ENCODE measurements at regions of chr20 and their contacts with region 1.

Region 1: DNA sequence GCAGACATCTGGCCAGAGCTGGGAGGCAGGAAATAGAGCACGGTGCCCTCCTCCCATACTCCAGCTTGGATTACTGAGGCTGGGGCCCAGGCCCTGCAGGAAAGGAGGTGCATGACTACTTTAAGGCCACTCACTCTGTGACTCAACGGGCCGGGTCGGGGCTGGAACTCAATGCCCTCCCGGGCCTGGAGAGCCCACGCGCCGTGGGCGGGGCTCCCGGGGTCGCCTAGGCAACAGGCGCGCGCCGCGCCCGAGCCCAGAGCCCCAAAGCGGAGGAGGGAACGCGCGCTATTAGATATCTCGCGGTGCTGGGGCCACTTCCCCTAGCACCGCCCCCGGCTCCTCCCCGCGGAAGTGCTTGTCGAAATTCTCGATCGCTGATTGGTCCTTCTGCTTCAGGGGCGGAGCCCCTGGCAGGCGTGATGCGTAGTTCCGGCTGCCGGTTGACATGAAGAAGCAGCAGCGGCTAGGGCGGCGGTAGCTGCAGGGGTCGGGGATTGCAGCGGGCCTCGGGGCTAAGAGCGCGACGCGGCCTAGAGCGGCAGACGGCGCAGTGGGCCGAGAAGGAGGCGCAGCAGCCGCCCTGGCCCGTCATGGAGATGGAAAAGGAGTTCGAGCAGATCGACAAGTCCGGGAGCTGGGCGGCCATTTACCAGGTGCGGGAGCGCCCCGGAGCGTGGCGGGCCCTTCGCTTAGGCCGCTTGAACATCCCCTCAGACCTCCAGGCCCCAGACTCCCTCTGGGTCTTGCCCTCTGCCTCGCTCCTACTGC is at the start of gene PTPN1:
- DNase-seq: peak; percentile 97 to 100 (median 99)
- ATAC-seq: peak; percentile 98
- H3K4me3 ChIP-seq: peak within 1 kb of the TSS; percentile 88
- H3K4me3 Mint-ChIP-seq: peak within 1 kb of the TSS; percentile 93 to 100 (median 97)
- H3K27ac ChIP-seq: peak within 1 kb of the TSS; percentile 89
- H3K27ac Mint-ChIP-seq: peak within 1 kb of the TSS; percentile 93 to 98 (median 98)
- H3K4me1 ChIP-seq: peaks cover 32 to 38% of the 10 kb centered on the region in 2 donors
- H3K4me1 Mint-ChIP-seq: peaks cover 36 to 52% (median 46%) of the 10 kb centered on the region in 7 donors
- H3K27me3 ChIP-seq: no peaks in the 10 kb centered on the region
- H3K27me3 Mint-ChIP-seq: no peaks in the 10 kb centered on the region
- total RNA-seq, gene PTPN1: 53.9 to 80.5 (median 60.2) TPM

Region 2: DNA sequence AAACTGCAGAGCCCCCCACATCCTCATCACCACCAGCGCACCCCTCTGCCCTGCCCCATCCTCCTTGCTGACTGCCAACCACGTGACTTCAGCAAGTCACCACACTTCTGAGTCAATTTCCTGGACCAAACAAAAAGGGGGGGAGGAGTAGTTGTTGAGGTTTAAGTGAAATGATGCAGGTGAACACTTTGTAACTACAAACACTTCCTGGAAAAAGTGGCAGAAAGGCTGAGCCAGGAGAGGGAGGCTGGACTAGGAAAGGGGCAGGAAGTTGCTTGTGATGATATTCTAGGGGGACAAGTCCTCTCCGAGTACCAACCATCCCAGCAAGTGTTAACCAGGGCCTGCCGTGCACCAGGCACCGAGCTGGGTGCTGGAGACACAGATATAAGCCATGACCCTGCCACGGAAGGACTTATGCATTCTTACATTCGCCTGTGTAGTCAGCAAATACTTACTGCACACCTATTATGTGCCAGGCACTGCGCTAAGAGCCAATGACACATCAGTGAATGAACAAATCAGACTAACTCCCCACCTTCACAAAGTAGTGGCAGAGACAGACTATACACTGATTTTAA is 1749.6 kb before region 1 on chr20:
- CTCF ChIA-PET with region 1: no interaction called
- POLR2A ChIA-PET with region 1: no interaction called
- intact Hi-C with region 1: no loop called
- DNase-seq: peak in 8 of 9 donors; percentile 21 to 74 (median 62)
- ATAC-seq: peak; percentile 85
- H3K4me3 ChIP-seq: peak overlapping the region; percentile 48
- H3K4me3 Mint-ChIP-seq: peak overlapping the region in 9 of 10 donors; percentile 54 to 81 (median 70)
- H3K27ac ChIP-seq: peak overlapping the region; percentile 57
- H3K27ac Mint-ChIP-seq: peak overlapping the region; percentile 85 to 95 (median 93)
- H3K4me1 ChIP-seq: peaks cover 45 to 72% of the 10 kb centered on the region in 2 donors
- H3K4me1 Mint-ChIP-seq: peaks cover 38 to 86% (median 58%) of the 10 kb centered on the region in 7 donors
- H3K27me3 ChIP-seq: no peaks in the 10 kb centered on the region
- H3K27me3 Mint-ChIP-seq: no peaks in the 10 kb centered on the region

Region 3: GRCh38 chr20:49594143-49594930 is 915.8 kb before region 1 on chr20:
- CTCF ChIA-PET with region 1: no interaction called
- POLR2A ChIA-PET with region 1: no interaction called
- intact Hi-C with region 1: loop called in 1 of 2 experiments (anchors 10 kb)
- DNase-seq: peak in 1 of 9 donors; percentile 76
- ATAC-seq: no peak
- H3K4me3 ChIP-seq: no peak overlapping the region
- H3K4me3 Mint-ChIP-seq: peak overlapping the region in 1 of 10 donors; percentile 85
- H3K27ac ChIP-seq: no peak overlapping the region
- H3K27ac Mint-ChIP-seq: peak overlapping the region in 1 of 9 donors; percentile 97
- H3K4me1 ChIP-seq: peaks cover 0 to 38% of the 10 kb centered on the region in 2 donors
- H3K4me1 Mint-ChIP-seq: peaks cover 0 to 86% (median 4%) of the 10 kb centered on the region in 7 donors
- H3K27me3 ChIP-seq: no peaks in the 10 kb centered on the region
- H3K27me3 Mint-ChIP-seq: peaks cover 0 to 13% (median 4%) of the 10 kb centered on the region in 5 donors

Region 4: DNA sequence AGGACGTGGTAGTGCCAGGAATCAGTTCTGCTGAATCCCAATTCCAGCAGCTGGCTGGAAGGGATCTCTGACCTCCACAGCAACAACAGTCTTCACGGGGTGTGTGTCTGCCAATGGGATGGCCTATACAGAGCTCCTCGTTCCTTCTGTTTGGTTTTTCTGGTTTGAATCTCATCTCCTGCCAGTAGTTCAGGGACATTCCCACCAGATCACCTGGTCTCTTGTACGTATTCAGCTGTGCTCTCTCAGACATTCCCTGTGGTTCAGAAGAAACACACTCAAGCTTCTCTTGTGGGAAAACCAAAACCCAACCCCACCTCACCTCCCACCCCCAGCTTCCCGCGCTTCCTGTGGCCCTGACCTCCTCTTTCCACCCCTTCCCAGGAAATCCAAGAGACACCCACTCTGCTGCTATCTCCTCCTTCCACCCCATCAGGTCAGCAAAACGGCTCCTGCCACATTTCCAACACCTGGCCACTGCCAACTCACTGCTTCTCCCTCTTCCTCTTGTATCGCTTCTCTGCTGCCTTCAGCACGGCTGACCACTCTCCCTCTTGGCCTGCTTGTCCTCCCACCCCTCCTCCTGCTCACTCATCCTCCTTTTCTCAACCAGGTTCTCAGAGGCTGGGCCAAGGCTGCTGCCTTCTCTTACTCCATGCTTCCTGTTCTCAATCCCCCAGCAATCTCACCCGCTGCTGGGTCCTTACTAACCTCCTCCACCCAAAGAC is 878.9 kb before region 1 on chr20:
- CTCF ChIA-PET with region 1: no interaction called
- POLR2A ChIA-PET with region 1: no interaction called
- intact Hi-C with region 1: no loop called
- DNase-seq: no peak
- ATAC-seq: no peak
- H3K4me3 ChIP-seq: no peak overlapping the region
- H3K4me3 Mint-ChIP-seq: no peak overlapping the region
- H3K27ac ChIP-seq: no peak overlapping the region
- H3K27ac Mint-ChIP-seq: peak overlapping the region in 1 of 9 donors; percentile 30
- H3K4me1 ChIP-seq: no peaks in the 10 kb centered on the region
- H3K4me1 Mint-ChIP-seq: peaks cover 0 to 18% (median 0%) of the 10 kb centered on the region in 7 donors
- H3K27me3 ChIP-seq: no peaks in the 10 kb centered on the region
- H3K27me3 Mint-ChIP-seq: peaks cover 0 to 5% (median 0%) of the 10 kb centered on the region in 5 donors

Region 5: DNA sequence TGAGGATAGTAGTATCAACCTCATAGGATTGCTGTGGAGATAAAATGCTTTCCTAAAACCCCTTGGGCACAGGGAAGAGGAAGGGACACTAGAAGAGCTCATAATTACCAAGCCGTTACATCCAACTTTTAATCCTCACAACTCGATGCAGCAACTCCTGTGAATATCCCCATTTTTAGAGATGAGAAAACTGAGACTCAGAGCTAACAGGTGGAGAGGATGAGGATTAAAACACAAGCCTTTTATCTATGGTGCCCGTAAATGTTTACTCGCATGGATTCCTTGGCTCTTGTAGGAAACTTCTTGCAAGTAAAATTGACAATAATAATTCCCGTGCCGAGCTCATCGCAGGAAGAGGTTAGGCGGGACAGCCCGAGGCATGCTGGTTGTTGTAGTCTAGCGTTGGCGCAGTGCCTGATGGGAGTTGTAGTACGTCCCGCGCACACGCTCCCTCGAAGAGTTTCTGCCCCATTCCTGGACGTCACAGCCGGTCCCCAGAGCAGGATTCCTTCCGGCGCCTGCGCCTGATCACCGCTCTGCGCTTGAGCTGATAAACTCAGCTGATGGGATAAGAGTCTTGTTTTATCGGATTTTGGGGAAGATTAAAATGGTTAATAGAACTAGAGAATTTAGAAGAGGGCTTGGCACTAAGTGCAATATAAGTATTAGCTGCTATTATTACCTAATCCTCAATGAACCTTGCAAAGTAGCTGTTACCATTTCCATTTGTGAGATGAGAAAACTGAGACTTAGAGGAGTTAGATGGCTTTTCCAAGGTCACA is 394.3 kb before region 1 on chr20:
- CTCF ChIA-PET with region 1: no interaction called
- POLR2A ChIA-PET with region 1: interaction called, 6 read pairs
- intact Hi-C with region 1: loop called (anchors 1 kb)
- DNase-seq: peak; percentile 69 to 91 (median 87)
- ATAC-seq: peak; percentile 90
- H3K4me3 ChIP-seq: peak overlapping the region; percentile 58
- H3K4me3 Mint-ChIP-seq: peak overlapping the region; percentile 78 to 97 (median 90)
- H3K27ac ChIP-seq: peak overlapping the region; percentile 76
- H3K27ac Mint-ChIP-seq: peak overlapping the region; percentile 70 to 98 (median 92)
- H3K4me1 ChIP-seq: peaks cover 38 to 39% of the 10 kb centered on the region in 2 donors
- H3K4me1 Mint-ChIP-seq: peaks cover 37 to 55% (median 51%) of the 10 kb centered on the region in 7 donors
- H3K27me3 ChIP-seq: no peaks in the 10 kb centered on the region
- H3K27me3 Mint-ChIP-seq: no peaks in the 10 kb centered on the region

Region 6: DNA sequence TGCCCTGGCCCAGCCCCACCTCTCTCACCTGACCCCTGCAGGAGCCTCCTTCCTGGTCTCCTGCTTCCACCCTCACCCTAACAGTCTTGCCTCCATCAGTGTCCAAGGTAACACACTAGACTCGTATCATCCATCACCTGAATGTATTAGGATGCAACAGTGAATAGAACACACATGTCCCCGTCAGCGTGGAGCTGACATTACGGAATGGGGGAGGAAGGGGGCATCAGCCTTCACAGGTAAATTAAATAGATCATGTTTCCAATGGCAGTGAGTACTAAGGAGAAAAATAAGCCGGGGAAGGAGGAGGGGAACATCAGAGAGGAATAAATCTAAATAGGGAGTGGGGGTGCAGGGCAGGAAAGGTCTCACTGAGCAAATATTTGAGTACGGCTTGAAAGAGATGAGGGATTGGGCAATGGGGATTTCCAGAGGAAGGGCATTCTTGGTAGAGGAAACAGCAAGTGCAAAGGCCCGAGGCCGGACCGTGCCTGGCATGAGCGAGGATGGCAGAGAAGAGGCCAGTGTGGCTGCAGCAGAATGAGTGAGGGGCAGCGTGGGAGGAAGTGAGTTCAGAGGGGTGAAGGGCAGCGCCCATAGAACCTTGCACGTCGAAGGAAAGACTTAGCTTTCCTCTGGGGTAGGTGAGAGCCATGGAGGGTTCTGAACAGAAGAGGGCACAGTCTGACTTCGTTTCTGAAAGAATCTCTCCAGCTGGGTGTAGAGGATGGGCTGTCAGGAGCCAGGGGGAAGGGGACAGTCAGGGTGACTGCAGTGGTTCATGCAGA is 110.0 kb before region 1 on chr20:
- CTCF ChIA-PET with region 1: no interaction called
- POLR2A ChIA-PET with region 1: no interaction called
- intact Hi-C with region 1: no loop called
- DNase-seq: no peak
- ATAC-seq: peak; percentile 20
- H3K4me3 ChIP-seq: no peak overlapping the region
- H3K4me3 Mint-ChIP-seq: no peak overlapping the region
- H3K27ac ChIP-seq: no peak overlapping the region
- H3K27ac Mint-ChIP-seq: peak overlapping the region in 1 of 9 donors; percentile 38
- H3K4me1 ChIP-seq: no peaks in the 10 kb centered on the region
- H3K4me1 Mint-ChIP-seq: peaks cover 0 to 5% (median 0%) of the 10 kb centered on the region in 7 donors
- H3K27me3 ChIP-seq: no peaks in the 10 kb centered on the region
- H3K27me3 Mint-ChIP-seq: peaks cover 0 to 20% (median 0%) of the 10 kb centered on the region in 5 donors

Region 7: GRCh38 chr20:50478162-50479036 is 31.7 kb before region 1 on chr20:
- CTCF ChIA-PET with region 1: interaction called, 6 read pairs
- POLR2A ChIA-PET with region 1: interaction called, 12 read pairs
- intact Hi-C with region 1: loop called (anchors 1 to 2 kb)
- DNase-seq: peak; percentile 50 to 81 (median 73)
- ATAC-seq: peak; percentile 100
- H3K4me3 ChIP-seq: no peak overlapping the region
- H3K4me3 Mint-ChIP-seq: peak overlapping the region in 1 of 10 donors; percentile 19
- H3K27ac ChIP-seq: no peak overlapping the region
- H3K27ac Mint-ChIP-seq: peak overlapping the region in 1 of 9 donors; percentile 9
- H3K4me1 ChIP-seq: peaks cover 8 to 14% of the 10 kb centered on the region in 2 donors
- H3K4me1 Mint-ChIP-seq: peaks cover 8 to 41% (median 19%) of the 10 kb centered on the region in 7 donors
- H3K27me3 ChIP-seq: no peaks in the 10 kb centered on the region
- H3K27me3 Mint-ChIP-seq: no peaks in the 10 kb centered on the region

Region 8: DNA sequence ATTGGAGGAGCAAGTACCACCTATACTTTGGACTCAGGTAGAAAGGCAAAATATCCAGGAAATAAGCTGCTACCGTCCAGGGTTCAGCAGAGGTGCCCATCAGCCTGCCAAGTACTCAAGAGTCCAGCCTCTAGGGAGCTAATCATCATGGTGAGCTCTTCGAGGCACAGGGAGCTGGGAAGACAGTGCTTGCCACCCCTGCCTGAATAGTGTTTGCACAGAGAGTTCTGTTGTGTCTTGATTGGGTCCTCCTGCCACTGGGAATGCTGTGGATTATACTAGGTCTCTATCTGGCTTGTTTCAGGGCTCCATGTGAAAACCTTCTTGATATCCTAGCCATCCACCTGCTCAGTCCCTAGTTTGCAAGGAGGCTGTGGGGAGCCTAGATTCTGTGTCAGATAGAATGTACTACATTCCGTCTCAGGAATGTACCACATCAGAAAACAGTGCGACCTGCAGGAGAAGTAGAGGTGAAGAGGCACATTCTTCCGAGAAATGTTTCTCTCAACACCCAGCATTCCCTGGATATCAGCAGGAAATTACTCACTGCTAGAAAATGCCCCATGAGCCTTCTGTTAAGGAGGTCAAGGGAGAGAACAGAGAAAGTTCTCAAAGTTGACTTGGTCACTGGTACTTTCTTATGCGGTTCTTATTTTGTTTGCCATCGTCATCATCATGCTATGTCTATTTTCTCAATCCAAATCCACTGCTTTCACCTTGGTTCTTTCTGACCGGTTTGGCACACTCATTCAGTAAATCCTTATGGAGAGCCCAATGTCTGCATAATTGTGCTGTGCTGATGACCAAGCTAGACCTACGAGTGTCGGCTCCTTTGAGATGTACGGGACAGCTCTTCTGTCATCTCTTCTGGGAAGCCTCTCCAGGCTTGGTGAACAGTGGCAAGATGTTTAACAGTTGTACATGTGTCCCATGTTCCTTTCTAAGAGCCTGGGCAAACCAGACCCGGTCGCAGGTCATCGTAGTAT is 30.8 kb after region 1 on chr20:
- CTCF ChIA-PET with region 1: interaction called, 4 read pairs
- POLR2A ChIA-PET with region 1: interaction called, 17 read pairs
- intact Hi-C with region 1: loop called in 1 of 2 experiments (anchors 1 kb)
- DNase-seq: no peak
- ATAC-seq: no peak
- H3K4me3 ChIP-seq: no peak overlapping the region
- H3K4me3 Mint-ChIP-seq: peak overlapping the region in 7 of 10 donors; percentile 6 to 59 (median 32)
- H3K27ac ChIP-seq: no peak overlapping the region
- H3K27ac Mint-ChIP-seq: peak overlapping the region in 8 of 9 donors; percentile 3 to 87 (median 54)
- H3K4me1 ChIP-seq: peaks cover 13 to 34% of the 10 kb centered on the region in 2 donors
- H3K4me1 Mint-ChIP-seq: peaks cover 60 to 93% (median 82%) of the 10 kb centered on the region in 7 donors
- H3K27me3 ChIP-seq: no peaks in the 10 kb centered on the region
- H3K27me3 Mint-ChIP-seq: no peaks in the 10 kb centered on the region

Region 9: DNA sequence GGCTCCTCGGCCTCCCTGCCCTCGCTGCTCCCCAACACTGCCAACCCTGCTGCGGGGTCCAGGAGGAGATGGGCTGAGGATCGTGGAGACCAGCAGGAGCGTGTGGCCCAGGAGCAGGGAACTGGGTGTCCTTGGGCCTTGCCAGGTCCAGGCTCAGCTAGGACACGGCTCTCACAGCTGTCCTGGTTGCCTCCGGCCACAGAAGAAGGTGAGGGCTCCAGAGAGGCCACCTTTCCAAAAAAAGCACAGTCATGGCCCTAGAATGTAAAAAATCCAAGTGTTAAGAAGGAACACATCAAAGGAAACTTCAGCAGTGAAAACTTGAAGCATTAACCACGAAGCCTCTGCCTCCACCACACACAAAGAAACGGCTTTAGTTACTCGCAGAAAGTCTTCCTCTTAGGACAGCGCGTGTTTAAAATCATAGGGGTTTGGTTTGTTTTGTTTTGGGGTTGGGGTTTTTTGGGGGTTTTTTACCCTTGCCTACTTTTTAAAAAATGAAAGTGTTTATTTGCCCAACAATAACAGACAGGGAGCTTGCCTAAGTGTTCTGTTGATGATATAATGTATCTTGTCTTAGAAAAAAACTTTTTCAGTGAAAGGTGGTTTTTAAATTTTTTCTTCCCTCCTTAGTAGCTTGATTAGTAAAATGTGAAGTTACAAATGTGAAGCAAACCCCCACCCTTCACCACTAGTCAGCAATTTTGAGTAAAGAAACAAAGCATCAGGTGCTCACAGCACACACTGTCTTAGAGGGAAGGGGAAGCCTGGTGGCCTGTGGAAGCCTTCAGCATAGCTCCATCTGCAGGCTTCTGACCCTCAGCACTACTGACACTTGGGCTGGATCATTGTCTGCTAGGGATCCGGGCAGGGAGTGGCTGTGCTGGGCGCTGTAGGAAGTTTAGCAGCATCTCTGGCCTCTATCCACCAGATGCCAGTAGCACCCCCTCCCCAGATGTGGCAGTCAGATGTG is 60.0 kb after region 1 on chr20:
- CTCF ChIA-PET with region 1: interaction called, 67 read pairs
- POLR2A ChIA-PET with region 1: interaction called, 45 read pairs
- intact Hi-C with region 1: loop called (anchors 1 to 2 kb)
- DNase-seq: peak in 7 of 9 donors; percentile 18 to 49 (median 45)
- ATAC-seq: peak; percentile 79
- H3K4me3 ChIP-seq: no peak overlapping the region
- H3K4me3 Mint-ChIP-seq: peak overlapping the region; percentile 5 to 73 (median 45)
- H3K27ac ChIP-seq: peak overlapping the region; percentile 36
- H3K27ac Mint-ChIP-seq: peak overlapping the region; percentile 46 to 91 (median 83)
- H3K4me1 ChIP-seq: peaks cover 7 to 19% of the 10 kb centered on the region in 2 donors
- H3K4me1 Mint-ChIP-seq: peaks cover 39 to 75% (median 70%) of the 10 kb centered on the region in 7 donors
- H3K27me3 ChIP-seq: no peaks in the 10 kb centered on the region
- H3K27me3 Mint-ChIP-seq: no peaks in the 10 kb centered on the region

Region 10: DNA sequence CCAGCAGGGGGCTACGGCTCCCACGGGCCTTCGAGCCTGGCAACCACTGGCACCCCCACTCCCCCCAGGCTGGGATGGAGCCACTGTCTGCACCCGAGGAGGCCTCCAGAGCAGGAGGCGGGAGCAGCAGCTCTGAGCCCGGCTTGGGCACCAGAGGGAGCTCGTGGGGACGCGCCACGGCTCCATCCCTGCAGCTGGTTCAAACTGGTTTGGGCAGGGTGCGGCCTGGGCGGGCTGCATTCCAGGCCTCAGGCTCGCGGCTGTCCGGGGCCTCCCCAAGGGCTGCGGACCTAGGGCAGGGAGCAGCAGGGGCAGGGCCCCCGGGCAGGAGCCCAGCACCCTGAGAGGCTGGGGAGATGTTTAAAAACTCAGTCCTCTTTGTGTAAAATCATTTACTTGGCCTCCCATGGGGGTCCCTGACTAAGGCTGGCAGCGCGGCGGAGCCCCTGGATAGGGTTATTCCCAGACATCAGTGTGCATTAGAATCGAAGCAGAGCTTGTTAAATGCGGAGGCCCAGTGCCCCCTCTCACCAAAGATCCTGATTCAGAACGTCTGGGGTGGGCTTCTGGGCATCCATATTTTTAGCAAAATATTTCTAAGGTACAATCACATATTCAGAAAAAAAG is 280.6 kb after region 1 on chr20:
- CTCF ChIA-PET with region 1: no interaction called
- POLR2A ChIA-PET with region 1: interaction called, 3 read pairs
- intact Hi-C with region 1: loop called in 1 of 2 experiments (anchors 2 kb)
- DNase-seq: peak; percentile 62 to 80 (median 77)
- ATAC-seq: peak; percentile 68
- H3K4me3 ChIP-seq: peak overlapping the region; percentile 40
- H3K4me3 Mint-ChIP-seq: peak overlapping the region in 4 of 10 donors; percentile 27 to 63 (median 39)
- H3K27ac ChIP-seq: peak overlapping the region; percentile 69
- H3K27ac Mint-ChIP-seq: peak overlapping the region in 8 of 9 donors; percentile 63 to 86 (median 78)
- H3K4me1 ChIP-seq: peaks cover 11 to 16% of the 10 kb centered on the region in 2 donors
- H3K4me1 Mint-ChIP-seq: peaks cover 0 to 28% (median 15%) of the 10 kb centered on the region in 7 donors
- H3K27me3 ChIP-seq: no peaks in the 10 kb centered on the region
- H3K27me3 Mint-ChIP-seq: no peaks in the 10 kb centered on the region

Measured in naive thymus-derived CD4-positive, alpha-beta T cell (primary cell).